H1 (cell line): ENCODE measurements at regions of chr1 and their contacts with region 1.

Region 1: DNA sequence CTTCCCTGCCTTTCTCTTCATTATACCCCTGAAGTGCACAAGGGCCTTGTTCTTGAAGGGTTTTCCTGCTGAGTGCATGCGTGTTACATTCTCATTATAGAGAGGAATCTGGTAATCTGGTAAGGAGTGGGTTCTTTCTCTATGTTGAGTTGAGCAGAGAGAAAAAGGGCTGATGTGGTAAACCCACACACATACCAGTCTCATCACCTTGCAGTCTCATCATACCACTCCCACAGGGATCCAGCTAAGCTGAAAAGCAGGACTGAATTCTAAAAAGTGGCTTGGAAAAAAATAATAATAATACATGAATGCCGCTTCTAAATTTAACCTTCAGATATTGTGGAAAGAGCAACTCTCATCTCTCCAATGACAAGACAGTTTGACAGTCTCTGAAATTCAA is 10.5 kb upstream of the HTR1D start:
- DNase-seq: no peak
- H3K4me3 ChIP-seq: no peak overlapping the region
- H3K27ac ChIP-seq: no peak overlapping the region
- H3K4me1 ChIP-seq: peaks cover 0 to 3% (median 0%) of the 10 kb centered on the region in 4 experiments; a peak in 1 of 7 replicates
- H3K27me3 ChIP-seq: no peaks in the 10 kb centered on the region
- CTCF ChIP-seq: no peak
- EP300 ChIP-seq: no peak
- POLR2A ChIP-seq: no peak
- RAD21 ChIP-seq: no peak

Region 2: DNA sequence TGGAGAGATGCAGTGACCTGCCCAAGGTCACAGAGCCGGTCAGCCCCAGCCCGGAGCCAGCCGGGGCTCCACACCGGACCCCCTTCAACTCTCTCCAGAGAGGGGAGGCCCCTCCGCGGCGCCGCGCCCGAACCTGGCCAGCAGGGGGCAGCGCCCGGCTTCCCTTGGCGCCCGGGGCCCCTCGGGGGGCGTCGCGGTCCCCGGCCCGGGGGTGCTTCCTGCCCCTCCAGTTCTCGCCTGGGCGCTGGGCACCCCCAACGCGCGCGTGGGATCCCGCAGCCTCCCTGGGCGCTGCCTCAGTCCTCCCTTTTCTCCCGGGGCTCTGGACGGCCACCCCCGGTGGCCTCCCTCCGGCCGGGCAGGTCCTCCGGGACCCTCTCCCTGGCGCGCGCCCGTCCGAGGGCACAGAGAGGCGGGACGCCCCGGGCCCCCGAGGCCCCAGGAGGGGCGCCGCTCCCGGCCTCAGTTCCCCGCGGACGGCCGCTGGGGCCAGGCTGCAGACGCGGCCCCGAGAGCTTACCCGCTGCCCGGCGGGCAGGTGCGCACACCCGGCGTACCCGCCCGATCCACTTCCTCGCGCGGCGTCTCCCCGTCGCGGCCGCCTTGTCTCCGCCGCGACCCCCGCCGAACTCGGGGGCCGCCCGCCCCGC is 10.9 kb before region 1 on chr1:
- CTCF ChIA-PET with region 1: interaction called, 10 read pairs
- POLR2A ChIA-PET with region 1: no interaction called
- DNase-seq: peak in 1 of 2 experiments; percentile 88
- H3K4me3 ChIP-seq: peak overlapping the region; percentile 65 to 76 (median 70)
- H3K27ac ChIP-seq: no peak overlapping the region
- H3K4me1 ChIP-seq: peaks cover 6 to 11% (median 9%) of the 10 kb centered on the region in 4 experiments
- H3K27me3 ChIP-seq: peaks cover 0 to 4% (median 1%) of the 10 kb centered on the region in 4 experiments; a peak in 4 of 7 replicates
- CTCF ChIP-seq: peak; percentile 66 to 87 (median 74)
- EP300 ChIP-seq: no peak
- POLR2A ChIP-seq: no peak
- RAD21 ChIP-seq: peak; percentile 59 to 81

Region 3: GRCh38 chr1:23544444-23545389 is 316.9 kb after region 1 on chr1:
- CTCF ChIA-PET with region 1: no interaction called
- POLR2A ChIA-PET with region 1: no interaction called
- DNase-seq: peak in 1 of 2 experiments; percentile 85
- H3K4me3 ChIP-seq: no peak overlapping the region
- H3K27ac ChIP-seq: no peak overlapping the region
- H3K4me1 ChIP-seq: peaks cover 0 to 8% (median 4%) of the 10 kb centered on the region in 4 experiments; a peak in 3 of 7 replicates
- H3K27me3 ChIP-seq: no peaks in the 10 kb centered on the region
- CTCF ChIP-seq: peak; percentile 82 to 96 (median 91)
- EP300 ChIP-seq: no peak
- POLR2A ChIP-seq: no peak
- RAD21 ChIP-seq: peak; percentile 99 to 100